Activated CD4-positive, alpha-beta memory T cell treated with anti-CD3 and anti-CD28 coated beads, Interleukin-2, amount 10 ng/mL, durations not matched to agents 7 days and 5 days (primary cell): ENCODE measurements at regions of chr7 and their contacts with region 1.

Region 1: GRCh38 chr7:8295638-8296361 is 33.8 kb upstream of the ICA1 start:
- DNase-seq: peak; percentile 24
- H3K4me3 Mint-ChIP-seq: no peak overlapping the region
- H3K27ac Mint-ChIP-seq: no peak overlapping the region
- H3K4me1 Mint-ChIP-seq: peaks cover 2% of the 10 kb centered on the region
- H3K27me3 Mint-ChIP-seq: peaks cover 15% of the 10 kb centered on the region

Region 2: GRCh38 chr7:8277394-8277982 is 18.3 kb before region 1 on chr7:
- CTCF ChIA-PET with region 1: interaction called, 15 read pairs
- POLR2A ChIA-PET with region 1: no interaction called
- DNase-seq: no peak
- H3K4me3 Mint-ChIP-seq: no peak overlapping the region
- H3K27ac Mint-ChIP-seq: no peak overlapping the region
- H3K4me1 Mint-ChIP-seq: no peaks in the 10 kb centered on the region
- H3K27me3 Mint-ChIP-seq: peaks cover 4% of the 10 kb centered on the region

Region 3: DNA sequence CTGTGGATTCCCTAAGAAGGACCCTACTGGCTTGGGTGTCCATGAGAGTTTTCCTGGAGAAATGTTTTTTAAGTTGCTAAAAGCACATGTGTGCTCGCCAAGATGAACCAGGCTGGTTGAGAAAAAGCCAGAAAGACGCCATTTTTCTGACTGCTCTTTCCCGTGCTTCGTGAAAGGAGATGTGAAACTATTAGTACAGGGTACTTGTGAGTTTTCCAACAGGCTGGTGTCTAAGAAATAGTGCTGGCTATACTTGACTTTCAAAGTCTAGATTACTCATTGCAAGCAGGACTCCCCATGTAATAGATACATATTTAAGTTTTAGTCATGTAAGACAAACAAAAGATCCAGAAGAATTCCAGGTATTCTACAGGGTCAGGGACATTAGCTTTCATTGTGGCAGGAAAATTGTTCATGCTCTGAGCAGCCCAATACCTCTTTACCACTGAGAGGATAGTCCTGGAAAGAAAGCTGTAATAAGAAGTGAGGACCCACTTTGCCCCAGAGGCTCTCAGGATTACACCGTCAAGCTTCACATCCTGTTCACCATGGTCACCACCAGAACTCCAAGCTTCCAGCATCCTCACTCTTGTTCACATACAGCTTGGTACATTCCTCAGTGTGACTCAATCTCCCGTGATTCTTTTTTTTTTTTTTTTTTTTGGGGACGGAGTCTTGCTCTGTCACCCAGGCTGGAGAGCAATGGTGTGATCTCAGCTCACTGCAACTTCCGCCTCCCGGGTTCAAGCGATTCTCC is 10.0 kb after region 1 on chr7:
- CTCF ChIA-PET with region 1: interaction called, 14 read pairs
- POLR2A ChIA-PET with region 1: no interaction called
- DNase-seq: no peak
- H3K4me3 Mint-ChIP-seq: no peak overlapping the region
- H3K27ac Mint-ChIP-seq: no peak overlapping the region
- H3K4me1 Mint-ChIP-seq: no peaks in the 10 kb centered on the region
- H3K27me3 Mint-ChIP-seq: peaks cover 7% of the 10 kb centered on the region

Region 4: DNA sequence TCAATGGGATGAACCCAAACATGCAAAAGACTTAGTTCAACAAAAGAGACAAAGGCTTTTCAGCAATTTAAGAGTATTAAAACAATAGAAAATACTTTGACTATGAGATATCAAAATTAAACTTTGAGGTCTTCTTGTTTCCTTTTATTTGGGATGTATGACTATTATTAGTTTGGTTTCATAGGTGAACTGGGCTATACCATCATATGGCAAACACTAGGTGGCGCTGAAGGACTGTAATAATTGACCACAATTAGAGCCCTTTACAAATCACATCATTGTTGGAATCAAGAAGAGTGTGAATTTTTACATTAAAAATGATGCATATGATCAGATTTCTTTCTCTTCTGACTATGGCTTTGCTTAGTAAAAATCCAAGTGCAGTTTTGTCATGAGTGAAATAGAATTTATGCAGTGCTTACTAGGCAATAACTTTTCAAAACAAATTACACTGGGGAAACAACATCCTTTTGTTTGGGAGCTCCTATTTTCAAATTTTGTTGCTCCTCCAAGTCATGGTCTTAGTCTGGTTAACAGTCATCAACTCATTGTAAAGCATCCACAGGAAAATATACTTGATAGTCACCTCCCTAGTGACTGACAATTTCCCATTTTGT is 122.9 kb after region 1 on chr7:
- CTCF ChIA-PET with region 1: no interaction called
- POLR2A ChIA-PET with region 1: no interaction called
- DNase-seq: peak; percentile 34
- H3K4me3 Mint-ChIP-seq: no peak overlapping the region
- H3K27ac Mint-ChIP-seq: no peak overlapping the region
- H3K4me1 Mint-ChIP-seq: no peaks in the 10 kb centered on the region
- H3K27me3 Mint-ChIP-seq: peaks cover 2% of the 10 kb centered on the region